ENCODE measurements at regions of chr5 and their contacts with region 1.

Region 1: GRCh38 chr5:96344678-96345577 is 88.1 kb downstream of the PCSK1 start:
- DNase-seq: peak in 1 of 2 donors; percentile 25
- ATAC-seq: peak in 7 of 8 donors; percentile 64 to 91 (median 85)
- H3K4me3 ChIP-seq: no peak overlapping the region
- H3K27ac ChIP-seq: no peak overlapping the region
- H3K4me1 ChIP-seq: peaks cover 0 to 11% (median 2%) of the 10 kb centered on the region in 9 donors
- H3K27me3 ChIP-seq: no peaks in the 10 kb centered on the region
- CTCF ChIP-seq: peak; percentile 16 to 74 (median 61)

Region 2: GRCh38 chr5:96157841-96158291 is 187.1 kb before region 1 on chr5:
- intact Hi-C with region 1: no loop called
- DNase-seq: no peak
- ATAC-seq: no peak
- H3K4me3 ChIP-seq: no peak overlapping the region
- H3K27ac ChIP-seq: no peak overlapping the region
- H3K4me1 ChIP-seq: no peaks in the 10 kb centered on the region
- H3K27me3 ChIP-seq: no peaks in the 10 kb centered on the region
- CTCF ChIP-seq: no peak

Region 3: GRCh38 chr5:96324708-96325107 is 20.2 kb before region 1 on chr5:
- intact Hi-C with region 1: no loop called
- DNase-seq: no peak
- ATAC-seq: no peak
- H3K4me3 ChIP-seq: no peak overlapping the region
- H3K27ac ChIP-seq: no peak overlapping the region
- H3K4me1 ChIP-seq: no peaks in the 10 kb centered on the region
- H3K27me3 ChIP-seq: no peaks in the 10 kb centered on the region
- CTCF ChIP-seq: no peak

Region 4: GRCh38 chr5:96595300-96596090 is 250.6 kb after region 1 on chr5:
- intact Hi-C with region 1: loop called in 7 of 10 experiments (anchors 2 to 5 kb)
- DNase-seq: no peak
- ATAC-seq: no peak
- H3K4me3 ChIP-seq: no peak overlapping the region
- H3K27ac ChIP-seq: no peak overlapping the region
- H3K4me1 ChIP-seq: peaks cover 0 to 8% (median 0%) of the 10 kb centered on the region in 9 donors
- H3K27me3 ChIP-seq: peaks cover 0 to 3% (median 0%) of the 10 kb centered on the region in 7 donors
- CTCF ChIP-seq: peak in 8 of 9 donors; percentile 12 to 41 (median 26)

Region 5: GRCh38 chr5:96601811-96602244 is 256.9 kb after region 1 on chr5:
- intact Hi-C with region 1: loop called (anchors 1 to 5 kb)
- DNase-seq: peak in 1 of 2 donors; percentile 77
- ATAC-seq: peak; percentile 63 to 93 (median 88)
- H3K4me3 ChIP-seq: peak overlapping the region in 3 of 10 donors; percentile 16 to 29 (median 19)
- H3K27ac ChIP-seq: peak overlapping the region in 1 of 10 donors; percentile 6
- H3K4me1 ChIP-seq: peaks cover 0 to 16% (median 4%) of the 10 kb centered on the region in 9 donors
- H3K27me3 ChIP-seq: peaks cover 0 to 10% (median 0%) of the 10 kb centered on the region in 7 donors
- CTCF ChIP-seq: peak; percentile 67 to 87 (median 83)

Measured in heart right ventricle (tissue), 16 donors.